ENCODE measurements at regions of chr16 and their contacts with region 1.

Region 1: DNA sequence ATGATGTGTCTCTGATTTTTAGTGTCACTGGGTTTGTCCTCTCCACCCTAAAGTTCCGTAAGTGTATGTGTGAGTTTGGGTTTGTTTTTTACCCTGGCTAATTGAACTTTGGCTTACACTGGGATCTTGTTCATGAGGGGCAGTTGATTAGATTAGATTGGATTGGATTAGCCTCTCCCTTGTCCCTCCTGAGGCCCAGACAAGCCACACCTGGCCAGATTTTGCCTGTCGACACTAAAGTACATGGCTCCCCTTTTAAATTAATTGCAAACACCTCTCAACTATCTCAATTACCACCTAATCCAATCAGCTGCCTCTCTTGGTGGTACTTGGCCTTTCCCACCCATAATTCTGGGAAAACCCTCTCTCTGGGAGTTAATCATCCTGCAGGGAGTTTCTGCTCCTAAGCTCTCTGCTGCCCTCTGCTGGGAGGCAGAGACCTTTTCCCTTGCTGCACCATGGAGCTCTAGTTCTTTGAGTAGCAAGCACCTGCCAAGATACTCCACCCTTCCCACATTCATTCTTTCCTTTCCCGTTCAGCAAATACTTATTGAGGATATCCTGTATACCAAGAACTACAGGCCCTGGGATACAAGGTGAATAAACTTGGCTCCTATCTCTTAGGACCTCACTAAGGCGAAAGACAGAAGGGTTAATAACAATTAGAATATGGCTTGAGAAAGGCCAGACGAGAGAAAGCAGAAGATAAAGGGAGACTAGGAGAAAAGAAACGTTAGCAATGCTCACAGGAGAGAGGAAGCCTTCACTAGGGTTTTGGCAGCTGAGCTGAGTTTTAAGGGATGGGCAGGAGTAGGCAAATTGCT is 60.0 kb upstream of the MPHOSPH6 start:
- DNase-seq: peak; percentile 72
- ATAC-seq: peak; percentile 61
- H3K4me3 Mint-ChIP-seq: no peak overlapping the region
- H3K27ac Mint-ChIP-seq: no peak overlapping the region
- H3K4me1 Mint-ChIP-seq: no peaks in the 10 kb centered on the region
- H3K27me3 Mint-ChIP-seq: peaks cover 12% of the 10 kb centered on the region

Region 2: GRCh38 chr16:81885976-81886586 is 343.9 kb before region 1 on chr16:
- CTCF ChIA-PET with region 1: interaction called, 28 read pairs
- POLR2A ChIA-PET with region 1: no interaction called
- DNase-seq: peak; percentile 49
- ATAC-seq: peak; percentile 71
- H3K4me3 Mint-ChIP-seq: no peak overlapping the region
- H3K27ac Mint-ChIP-seq: no peak overlapping the region
- H3K4me1 Mint-ChIP-seq: no peaks in the 10 kb centered on the region
- H3K27me3 Mint-ChIP-seq: no peaks in the 10 kb centered on the region

Region 3: DNA sequence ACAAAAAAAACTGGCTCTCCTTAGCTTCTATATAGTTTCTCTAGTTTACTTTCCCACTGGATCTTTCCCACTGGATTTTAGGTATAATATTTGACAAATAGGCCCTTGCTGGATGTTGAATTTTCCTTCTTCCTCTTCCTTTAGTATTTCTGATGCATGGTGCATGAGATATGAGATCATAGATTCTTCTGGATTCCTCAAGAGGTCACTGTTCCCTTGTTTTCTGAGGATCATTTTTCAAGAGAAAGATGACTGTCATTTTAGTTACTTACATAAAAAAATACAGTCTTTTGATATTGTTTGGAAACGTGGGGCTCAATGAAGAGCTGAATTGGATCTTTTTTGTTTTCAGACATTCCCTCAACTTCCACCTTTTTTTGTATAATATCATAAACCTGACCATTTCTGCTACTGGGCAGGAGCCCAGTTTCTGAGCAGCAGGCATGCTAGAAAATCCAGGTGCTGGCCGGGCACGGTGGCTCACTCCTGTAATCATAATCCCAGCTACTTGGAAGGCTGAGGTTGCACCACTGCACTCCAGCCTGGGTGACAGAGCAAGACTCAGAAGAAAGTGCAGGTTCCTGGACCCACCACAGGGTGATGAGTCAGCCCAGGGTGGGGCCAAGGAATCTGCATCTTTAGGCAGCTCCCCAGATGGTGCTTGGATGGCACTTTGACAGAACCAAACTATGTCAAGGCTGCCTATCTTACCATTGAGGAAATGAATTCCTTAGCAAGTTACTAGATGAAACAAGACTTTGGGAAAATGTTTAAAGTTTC is 289.0 kb before region 1 on chr16:
- CTCF ChIA-PET with region 1: interaction called, 28 read pairs
- POLR2A ChIA-PET with region 1: no interaction called
- DNase-seq: no peak
- ATAC-seq: no peak
- H3K4me3 Mint-ChIP-seq: no peak overlapping the region
- H3K27ac Mint-ChIP-seq: no peak overlapping the region
- H3K4me1 Mint-ChIP-seq: peaks cover 2% of the 10 kb centered on the region
- H3K27me3 Mint-ChIP-seq: no peaks in the 10 kb centered on the region

Region 4: GRCh38 chr16:82061861-82062525 is 168.0 kb before region 1 on chr16:
- CTCF ChIA-PET with region 1: interaction called, 11 read pairs
- POLR2A ChIA-PET with region 1: no interaction called
- DNase-seq: peak; percentile 40
- ATAC-seq: no peak
- H3K4me3 Mint-ChIP-seq: no peak overlapping the region
- H3K27ac Mint-ChIP-seq: no peak overlapping the region
- H3K4me1 Mint-ChIP-seq: no peaks in the 10 kb centered on the region
- H3K27me3 Mint-ChIP-seq: peaks cover 3% of the 10 kb centered on the region

Region 5: DNA sequence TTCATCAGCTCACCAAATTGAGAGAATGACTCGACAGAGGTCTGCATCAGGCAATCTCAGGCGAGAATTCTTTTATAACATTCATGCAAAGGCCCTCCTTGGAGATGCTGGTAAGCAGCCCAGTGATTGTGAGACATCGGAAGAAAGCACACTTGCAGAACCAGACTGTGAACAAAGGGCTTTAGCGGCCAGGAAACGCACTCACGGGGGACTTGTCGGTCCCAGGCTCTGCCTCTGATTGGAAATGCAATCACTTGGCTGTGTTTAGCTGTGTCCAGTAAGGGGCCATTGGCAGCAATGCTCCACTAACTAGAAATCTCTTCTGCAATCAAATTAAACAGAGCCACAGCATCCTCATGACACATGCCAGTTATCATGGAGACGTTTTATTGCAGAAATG is 170.0 kb after region 1 on chr16:
- CTCF ChIA-PET with region 1: no interaction called
- POLR2A ChIA-PET with region 1: no interaction called
- DNase-seq: no peak
- ATAC-seq: no peak
- H3K4me3 Mint-ChIP-seq: no peak overlapping the region
- H3K27ac Mint-ChIP-seq: no peak overlapping the region
- H3K4me1 Mint-ChIP-seq: no peaks in the 10 kb centered on the region
- H3K27me3 Mint-ChIP-seq: peaks cover 8% of the 10 kb centered on the region